ENCODE measurements at regions of chr16 and their contacts with region 1.

Region 1: DNA sequence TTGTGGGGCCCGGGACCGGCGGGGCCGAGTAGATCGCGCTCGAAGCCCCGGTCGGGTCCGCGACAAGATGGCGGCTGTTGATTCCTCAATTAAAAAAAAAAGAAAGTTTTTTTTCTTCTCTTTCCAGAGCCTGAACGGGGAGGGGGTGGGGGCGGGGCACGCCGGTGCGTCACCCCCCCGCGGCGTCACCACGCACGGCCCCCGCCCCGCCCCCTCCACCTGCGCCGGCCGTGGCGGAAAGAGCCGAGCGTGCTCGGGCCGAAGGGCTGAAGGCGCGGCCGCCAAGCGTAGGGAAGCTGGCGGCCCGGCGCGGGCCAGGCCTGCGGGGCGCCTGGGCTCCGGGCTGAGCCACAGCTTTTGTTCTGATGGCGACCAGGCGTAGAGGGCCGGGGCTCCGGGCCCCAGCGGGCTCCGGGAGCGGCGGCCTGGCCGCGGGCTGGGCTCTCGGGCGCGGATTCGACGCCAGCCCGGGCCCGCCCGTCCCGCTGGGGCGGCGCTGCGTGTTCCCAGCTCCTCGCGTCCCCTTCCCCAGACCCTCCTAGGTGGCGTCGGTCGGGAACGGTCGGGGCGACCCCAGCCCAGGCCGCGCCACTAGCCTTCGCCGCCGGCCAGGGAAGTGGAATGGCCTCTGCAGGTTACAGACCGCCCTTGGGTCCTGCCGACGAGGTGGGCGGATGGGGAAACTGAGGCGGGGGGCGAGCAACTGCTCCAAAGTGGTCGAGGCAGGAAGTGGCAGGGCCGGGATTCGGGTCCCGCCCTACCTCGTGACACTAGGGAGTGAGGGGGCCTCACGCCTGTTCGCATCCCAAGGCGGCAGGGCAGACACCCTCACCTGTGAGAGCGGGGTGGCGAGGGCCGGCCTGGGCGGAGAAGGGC is at the start of gene CREBBP:
- DNase-seq: peak; percentile 94
- total RNA-seq, gene CREBBP: 39.0 TPM

Region 2: GRCh38 chr16:3611146-3611975 is 269.5 kb before region 1 on chr16 and contains the start of gene SLX4:
- intact Hi-C with region 1: loop called (anchors 5 kb)
- DNase-seq: peak; percentile 95
- total RNA-seq, gene SLX4: 2.7 TPM

Region 3: DNA sequence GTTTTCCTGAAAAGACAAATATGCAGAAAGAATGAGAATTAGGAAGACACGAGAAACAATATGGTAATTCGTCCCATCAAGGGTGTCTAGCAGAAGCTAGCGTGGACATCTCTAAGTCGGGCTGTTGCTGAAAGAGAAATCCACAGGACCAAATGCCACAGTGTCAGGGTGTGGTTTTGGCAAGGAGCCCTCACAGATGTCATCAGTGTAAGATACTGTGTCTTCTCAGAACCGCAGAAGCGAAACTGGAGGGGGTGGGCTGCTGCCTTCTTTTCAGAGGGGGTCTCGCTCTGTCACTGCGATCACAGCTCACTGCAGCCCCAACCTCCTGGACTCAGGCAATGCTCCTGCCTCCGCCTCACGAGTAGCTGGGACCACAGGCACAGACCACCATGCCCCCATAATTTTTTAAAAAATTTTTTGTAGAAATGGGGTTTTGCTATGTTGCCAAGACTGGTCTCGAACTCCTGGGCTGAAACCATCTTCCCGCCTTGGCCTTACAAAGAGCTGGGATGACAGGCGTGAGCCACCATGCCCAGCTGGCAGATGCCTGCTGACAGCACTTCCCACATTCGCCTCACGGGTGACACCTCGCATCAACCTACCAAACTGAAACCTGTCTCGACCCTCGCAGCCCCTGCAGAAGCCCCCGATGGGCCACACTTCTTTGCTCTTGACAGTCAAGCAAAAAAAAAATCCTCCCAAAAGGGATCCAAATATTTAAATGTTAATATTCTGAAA is 189.7 kb before region 1 on chr16:
- intact Hi-C with region 1: loop called (anchors 1 kb)
- DNase-seq: peak; percentile 68

Region 4: DNA sequence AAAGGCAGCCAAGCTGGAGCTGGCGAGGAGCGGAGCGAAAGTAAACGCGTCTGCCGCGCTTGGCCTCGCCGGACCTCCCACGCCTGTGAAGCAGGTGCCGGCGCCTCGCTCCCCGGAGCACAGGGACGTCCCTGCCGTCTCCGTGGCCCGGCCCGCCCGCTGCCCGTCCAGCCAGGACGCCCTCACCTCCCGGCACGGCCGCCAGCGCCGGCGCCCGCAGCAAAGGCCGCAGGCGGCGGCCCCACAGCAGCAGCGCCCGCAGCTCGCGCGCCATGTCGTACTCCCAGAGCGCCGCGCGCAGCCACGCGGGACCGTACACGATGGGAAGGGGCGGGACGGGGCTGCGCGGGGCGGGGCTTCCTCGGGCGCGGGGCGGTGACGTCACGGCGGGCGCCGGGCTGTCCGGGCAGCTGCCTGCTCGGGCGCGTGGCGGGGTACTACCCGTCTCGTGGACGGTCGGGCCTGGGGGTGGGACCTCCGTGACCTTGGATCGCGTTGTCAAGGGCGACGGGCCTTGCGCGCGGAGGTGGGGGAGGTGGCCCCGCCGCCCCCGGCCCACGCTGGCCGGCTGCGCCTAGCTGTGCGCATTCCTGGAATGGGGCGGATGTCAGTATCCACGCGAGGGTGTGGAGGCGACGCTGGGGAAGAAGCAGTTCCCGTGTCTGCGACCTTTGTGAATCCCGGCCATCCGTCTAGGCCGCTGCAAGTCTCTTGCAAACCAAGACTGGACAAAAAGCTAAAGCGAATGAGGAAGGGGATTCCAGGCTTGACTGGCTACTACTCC is 163.4 kb before region 1 on chr16 and contains the start of gene TRAP1:
- intact Hi-C with region 1: loop called (anchors 5 kb)
- DNase-seq: peak; percentile 97
- total RNA-seq, gene TRAP1: 78.6 TPM

Region 5: GRCh38 chr16:4048481-4048880 is 167.6 kb after region 1 on chr16:
- intact Hi-C with region 1: no loop called
- DNase-seq: no peak

Measured in cardiac septum (tissue), 1 donor.